ENCODE measurements at regions of chr1 and their contacts with region 1.

Region 1: DNA sequence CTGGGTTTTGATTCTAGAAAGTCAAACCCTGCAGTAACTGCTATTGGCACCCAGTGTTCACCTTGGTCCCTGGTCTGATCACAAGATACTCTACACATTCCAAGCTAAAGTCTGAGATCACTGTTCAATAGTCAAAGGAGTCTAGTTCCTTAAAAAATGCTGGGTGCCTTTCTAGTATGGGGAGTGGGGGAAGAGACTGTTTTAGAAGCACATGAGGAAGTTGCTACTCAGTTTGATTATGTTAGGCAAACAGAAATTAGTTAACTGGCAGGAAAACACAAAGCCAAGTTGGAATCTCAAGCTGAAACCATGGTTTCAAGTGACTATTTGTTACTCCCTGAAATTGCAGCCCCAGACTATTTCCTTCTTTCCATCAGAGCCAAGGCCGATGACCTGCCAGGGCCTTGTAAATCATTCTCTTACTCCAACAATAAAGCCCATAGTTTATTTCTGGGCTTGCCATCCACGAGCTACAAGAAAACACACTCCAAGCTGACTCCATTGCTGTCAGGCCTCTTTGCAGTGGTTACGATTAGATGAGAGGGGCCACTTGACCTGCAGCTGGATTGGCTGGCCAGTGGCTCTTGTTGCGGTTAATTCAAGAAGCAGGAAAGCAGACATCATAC is 21.1 kb upstream of the VTCN1 start:
- DNase-seq: peak; percentile 38
- H3K4me3 Mint-ChIP-seq: no peak overlapping the region
- H3K27ac Mint-ChIP-seq: peak overlapping the region; percentile 63
- H3K4me1 Mint-ChIP-seq: peaks cover 22% of the 10 kb centered on the region
- H3K27me3 Mint-ChIP-seq: no peaks in the 10 kb centered on the region
- CTCF ChIP-seq: no peak

Region 2: GRCh38 chr1:117268535-117269455 is 36.9 kb after region 1 on chr1:
- CTCF ChIA-PET with region 1: no interaction called
- intact Hi-C with region 1: loop called (anchors 5 kb)
- DNase-seq: peak; percentile 50
- H3K4me3 Mint-ChIP-seq: no peak overlapping the region
- H3K27ac Mint-ChIP-seq: peak overlapping the region; percentile 30
- H3K4me1 Mint-ChIP-seq: peaks cover 28% of the 10 kb centered on the region
- H3K27me3 Mint-ChIP-seq: no peaks in the 10 kb centered on the region
- CTCF ChIP-seq: no peak